A549 (cell line): ENCODE measurements at regions of chr19 and their contacts with region 1.

Region 1: DNA sequence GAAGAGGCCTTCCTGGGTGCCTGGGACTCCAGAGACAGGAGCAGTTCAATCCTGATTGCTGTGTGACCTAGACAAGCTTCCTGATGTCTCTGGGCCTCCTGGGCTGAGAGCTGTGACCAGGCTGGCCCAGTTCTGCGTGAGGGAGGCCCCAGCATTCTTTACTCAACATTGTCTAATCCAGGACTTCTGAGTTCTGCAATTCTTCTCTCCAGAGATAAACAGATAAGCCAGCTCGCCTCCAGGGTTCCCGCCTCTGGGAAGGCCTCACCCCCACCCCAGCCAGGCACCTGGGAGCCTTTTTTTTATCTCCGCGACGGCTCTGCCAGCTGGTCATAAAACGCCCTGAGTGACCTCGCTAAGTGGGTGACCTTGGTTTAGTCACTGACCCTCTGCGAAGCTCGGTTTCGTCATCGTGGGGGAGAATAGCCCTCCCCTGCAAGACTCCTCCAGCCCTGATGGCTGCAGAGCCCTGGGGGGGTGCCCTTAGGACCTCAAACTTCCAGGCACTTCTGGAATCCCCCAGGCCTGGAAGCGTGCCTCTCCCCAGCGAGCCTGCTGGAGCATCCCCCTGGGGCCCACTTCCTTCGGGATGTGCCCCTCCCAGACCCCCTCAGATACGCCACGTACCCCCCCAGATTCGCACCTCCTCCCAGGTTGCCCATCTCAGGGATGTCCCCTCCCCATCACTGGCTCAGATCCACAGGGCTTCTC is 1.9 kb downstream of the SULT2B1 start:
- DNase-seq: peak; percentile 94 to 99
- ATAC-seq: peak; percentile 64 to 74
- H3K4me3 ChIP-seq: no peak overlapping the region
- H3K27ac ChIP-seq: peak overlapping the region; percentile 97 to 100
- H3K4me1 ChIP-seq: peaks cover 72% of the 10 kb centered on the region
- CTCF ChIP-seq: no peak; the same call in 2 of the 3 replicates
- EP300 ChIP-seq: peak; percentile 91 to 98; a peak in 3 of 5 replicates
- POLR2A ChIP-seq: no peak
- RAD21 ChIP-seq: peak in 1 of 2 experiments; percentile 71; a peak in 4 of 5 replicates

Region 2: DNA sequence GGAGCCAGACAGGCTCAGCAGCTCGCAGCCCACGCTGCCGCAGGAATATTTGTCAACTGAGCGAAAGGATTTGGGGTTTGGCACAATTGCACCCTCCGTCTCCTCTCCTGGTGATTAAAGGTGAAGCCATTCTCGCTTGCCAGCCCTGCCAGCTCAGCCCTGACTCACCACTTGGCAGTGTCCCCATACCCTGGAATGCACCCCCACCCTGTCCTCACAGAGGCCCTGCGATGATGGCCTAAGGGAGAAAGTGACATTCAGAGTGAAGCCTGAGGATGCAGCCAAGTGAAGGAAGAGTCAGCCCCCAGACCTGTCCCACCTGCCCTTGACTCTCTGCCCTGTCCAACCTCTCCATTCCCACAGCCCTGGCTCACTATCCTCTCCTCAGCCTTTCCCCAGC is 65.8 kb before region 1 on chr19:
- CTCF ChIA-PET with region 1: interaction called, 100 read pairs
- POLR2A ChIA-PET with region 1: interaction called, 11 read pairs
- DNase-seq: peak; percentile 88 to 98
- ATAC-seq: peak; percentile 47 to 59
- H3K4me3 ChIP-seq: peak overlapping the region; percentile 23; the same call in 1 of the 3 replicates
- H3K27ac ChIP-seq: peak overlapping the region; percentile 91 to 94
- H3K4me1 ChIP-seq: peaks cover 72% of the 10 kb centered on the region
- CTCF ChIP-seq: no peak
- EP300 ChIP-seq: peak; percentile 50 to 71; a peak in 3 of 5 replicates
- POLR2A ChIP-seq: no peak
- RAD21 ChIP-seq: peak; percentile 13 to 39; a peak in 2 of 5 replicates

Region 3: GRCh38 chr19:48513289-48514122 is 40.3 kb before region 1 on chr19:
- CTCF ChIA-PET with region 1: interaction called, 7 read pairs
- POLR2A ChIA-PET with region 1: interaction called, 16 read pairs
- DNase-seq: peak; percentile 92 to 94
- ATAC-seq: peak; percentile 76 to 86
- H3K4me3 ChIP-seq: peak overlapping the region; percentile 59
- H3K27ac ChIP-seq: peak overlapping the region; percentile 92 to 93
- H3K4me1 ChIP-seq: peaks cover 34% of the 10 kb centered on the region
- CTCF ChIP-seq: no peak
- EP300 ChIP-seq: no peak
- POLR2A ChIP-seq: peak; percentile 48
- RAD21 ChIP-seq: peak; percentile 2 to 45; a peak in 4 of 5 replicates

Region 4: DNA sequence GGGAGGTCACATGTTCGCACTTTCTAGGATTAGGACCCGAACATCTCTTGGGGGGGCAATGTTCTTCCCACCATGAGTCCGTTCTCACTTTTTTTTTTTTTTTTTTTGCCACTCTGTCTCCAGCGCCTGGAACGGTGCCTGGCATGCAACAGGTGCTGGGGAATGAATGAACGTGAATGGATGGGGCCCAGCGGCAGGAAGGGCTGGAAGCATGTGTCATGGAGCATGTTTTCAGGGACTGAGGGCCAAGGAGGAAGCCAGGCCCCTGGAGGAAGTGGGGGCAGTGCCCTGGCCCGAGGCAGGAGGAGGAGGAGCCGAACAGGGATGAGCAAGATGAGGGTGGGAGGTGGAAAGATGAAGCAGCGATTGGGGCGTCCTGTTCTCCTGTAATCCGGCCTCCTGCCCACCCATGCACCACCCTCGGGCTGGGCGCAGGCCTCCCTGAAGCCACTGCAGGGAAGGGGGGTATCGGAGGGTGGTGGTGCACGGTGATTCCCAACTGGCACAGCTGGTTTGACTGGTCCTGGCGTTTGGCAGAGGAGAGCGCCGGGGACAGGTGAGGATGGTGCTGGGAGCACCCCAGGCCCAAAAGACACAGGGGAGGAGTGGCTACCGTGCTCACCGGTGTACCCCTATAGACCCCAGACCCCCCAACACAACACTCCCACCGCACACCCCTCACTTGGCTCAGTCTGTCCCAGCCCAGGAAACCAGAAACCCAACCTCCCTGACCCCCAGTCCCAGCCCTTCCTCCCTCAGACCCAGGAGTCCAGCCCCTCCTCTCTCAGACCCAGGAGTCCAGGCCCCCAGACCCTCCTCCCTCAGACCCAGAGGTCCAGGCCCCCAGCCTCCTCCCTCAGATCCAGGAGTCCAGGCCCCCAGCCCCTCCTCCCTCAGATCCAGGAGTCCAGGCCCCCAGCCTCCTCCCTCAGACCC is 10.4 kb before region 1 on chr19:
- CTCF ChIA-PET with region 1: interaction called, 24 read pairs
- POLR2A ChIA-PET with region 1: interaction called, 10 read pairs
- DNase-seq: peak; percentile 69 to 78
- ATAC-seq: peak; percentile 72 to 79
- H3K4me3 ChIP-seq: no peak overlapping the region
- H3K27ac ChIP-seq: peak overlapping the region; percentile 62 to 85
- H3K4me1 ChIP-seq: peaks cover 41% of the 10 kb centered on the region
- CTCF ChIP-seq: no peak
- EP300 ChIP-seq: no peak
- POLR2A ChIP-seq: no peak
- RAD21 ChIP-seq: no peak

Region 5: GRCh38 chr19:48568345-48568886 is 14.6 kb after region 1 on chr19:
- CTCF ChIA-PET with region 1: interaction called, 15 read pairs
- POLR2A ChIA-PET with region 1: interaction called, 45 read pairs
- DNase-seq: peak; percentile 91 to 98
- ATAC-seq: peak; percentile 95 to 97
- H3K4me3 ChIP-seq: peak overlapping the region; percentile 23; the same call in 1 of the 3 replicates
- H3K27ac ChIP-seq: peak overlapping the region; percentile 97 to 100
- H3K4me1 ChIP-seq: peaks cover 85% of the 10 kb centered on the region
- CTCF ChIP-seq: no peak
- EP300 ChIP-seq: peak; percentile 59 to 87; a peak in 3 of 5 replicates
- POLR2A ChIP-seq: peak; percentile 47
- RAD21 ChIP-seq: peak; percentile 23 to 55

Region 6: GRCh38 chr19:48578891-48579290 is 25.1 kb after region 1 on chr19:
- CTCF ChIA-PET with region 1: interaction called, 79 read pairs
- POLR2A ChIA-PET with region 1: interaction called, 15 read pairs
- DNase-seq: no peak
- ATAC-seq: peak in 1 of 2 experiments; percentile 11; a peak in 1 of 6 replicates
- H3K4me3 ChIP-seq: no peak overlapping the region
- H3K27ac ChIP-seq: peak overlapping the region in 1 of 2 experiments; percentile 5; a peak in 2 of 6 replicates
- H3K4me1 ChIP-seq: peaks cover 27% of the 10 kb centered on the region
- CTCF ChIP-seq: no peak
- EP300 ChIP-seq: no peak
- POLR2A ChIP-seq: no peak
- RAD21 ChIP-seq: no peak